H1 (cell line): ENCODE measurements at regions of chr4 and their contacts with region 1.

Region 1: GRCh38 chr4:40976343-40976742 is 226.6 kb downstream of the NSUN7 start:
- DNase-seq: no peak
- H3K4me3 ChIP-seq: no peak overlapping the region
- H3K27ac ChIP-seq: no peak overlapping the region
- H3K4me1 ChIP-seq: no peaks in the 10 kb centered on the region
- H3K27me3 ChIP-seq: no peaks in the 10 kb centered on the region
- CTCF ChIP-seq: peak in 2 of 3 experiments; percentile 16 to 59; a peak in 2 of 4 replicates
- EP300 ChIP-seq: no peak
- POLR2A ChIP-seq: no peak
- RAD21 ChIP-seq: peak; percentile 43 to 59

Region 2: DNA sequence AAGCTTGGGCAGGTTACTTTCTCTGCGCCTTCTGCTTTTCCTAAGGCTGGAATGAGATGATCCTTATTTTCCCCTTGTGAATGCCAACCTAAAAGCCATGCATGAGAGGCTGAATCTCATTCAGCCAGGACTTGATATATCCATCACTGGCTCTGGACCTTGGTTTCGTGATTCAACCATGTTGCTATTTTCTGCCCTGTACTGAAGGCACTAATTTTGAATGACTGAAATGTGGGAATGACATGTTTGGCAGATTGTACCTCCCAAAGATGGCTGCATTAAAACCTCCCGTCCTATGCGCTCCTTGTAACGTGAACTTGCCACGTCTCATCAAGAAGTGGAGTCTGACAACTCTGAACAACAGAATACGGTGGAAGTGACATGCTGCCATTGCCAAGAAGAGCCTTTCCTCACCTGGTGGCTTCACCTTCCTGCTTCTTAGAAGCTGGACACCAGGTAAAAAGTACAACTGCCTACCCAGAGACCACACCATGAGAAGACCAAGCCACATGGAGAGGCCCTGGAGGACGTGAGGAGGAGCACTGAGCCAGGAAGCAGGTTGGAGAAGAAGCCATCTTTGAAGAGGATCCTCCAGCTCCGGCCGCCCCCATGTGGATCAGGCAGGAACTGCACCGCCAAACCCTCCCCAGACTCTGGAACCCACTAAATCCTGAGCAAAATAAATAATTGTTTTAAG is 52.1 kb before region 1 on chr4:
- CTCF ChIA-PET with region 1: interaction called, 53 read pairs
- POLR2A ChIA-PET with region 1: interaction called, 3 read pairs
- DNase-seq: peak in 1 of 2 experiments; percentile 93
- H3K4me3 ChIP-seq: no peak overlapping the region
- H3K27ac ChIP-seq: no peak overlapping the region
- H3K4me1 ChIP-seq: peaks cover 0 to 5% (median 0%) of the 10 kb centered on the region in 4 experiments; a peak in 3 of 7 replicates
- H3K27me3 ChIP-seq: no peaks in the 10 kb centered on the region
- CTCF ChIP-seq: peak; percentile 74 to 84 (median 83)
- EP300 ChIP-seq: no peak
- POLR2A ChIP-seq: no peak
- RAD21 ChIP-seq: peak; percentile 54 to 69

Region 3: GRCh38 chr4:40953283-40954087 is 22.9 kb before region 1 on chr4:
- CTCF ChIA-PET with region 1: interaction called, 18 read pairs
- POLR2A ChIA-PET with region 1: no interaction called
- DNase-seq: no peak
- H3K4me3 ChIP-seq: no peak overlapping the region
- H3K27ac ChIP-seq: no peak overlapping the region
- H3K4me1 ChIP-seq: peaks cover 0 to 6% (median under 1%) of the 10 kb centered on the region in 4 experiments; a peak in 3 of 7 replicates
- H3K27me3 ChIP-seq: no peaks in the 10 kb centered on the region
- CTCF ChIP-seq: no peak
- EP300 ChIP-seq: no peak
- POLR2A ChIP-seq: no peak
- RAD21 ChIP-seq: no peak

Region 4: GRCh38 chr4:41095973-41096372 is 119.6 kb after region 1 on chr4:
- CTCF ChIA-PET with region 1: interaction called, 10 read pairs
- POLR2A ChIA-PET with region 1: no interaction called
- DNase-seq: no peak
- H3K4me3 ChIP-seq: no peak overlapping the region
- H3K27ac ChIP-seq: no peak overlapping the region
- H3K4me1 ChIP-seq: peaks cover 0 to 3% (median 0%) of the 10 kb centered on the region in 4 experiments; a peak in 1 of 7 replicates
- H3K27me3 ChIP-seq: no peaks in the 10 kb centered on the region; a peak in 1 of 7 replicates
- CTCF ChIP-seq: no peak
- EP300 ChIP-seq: no peak
- POLR2A ChIP-seq: no peak
- RAD21 ChIP-seq: no peak

Region 5: DNA sequence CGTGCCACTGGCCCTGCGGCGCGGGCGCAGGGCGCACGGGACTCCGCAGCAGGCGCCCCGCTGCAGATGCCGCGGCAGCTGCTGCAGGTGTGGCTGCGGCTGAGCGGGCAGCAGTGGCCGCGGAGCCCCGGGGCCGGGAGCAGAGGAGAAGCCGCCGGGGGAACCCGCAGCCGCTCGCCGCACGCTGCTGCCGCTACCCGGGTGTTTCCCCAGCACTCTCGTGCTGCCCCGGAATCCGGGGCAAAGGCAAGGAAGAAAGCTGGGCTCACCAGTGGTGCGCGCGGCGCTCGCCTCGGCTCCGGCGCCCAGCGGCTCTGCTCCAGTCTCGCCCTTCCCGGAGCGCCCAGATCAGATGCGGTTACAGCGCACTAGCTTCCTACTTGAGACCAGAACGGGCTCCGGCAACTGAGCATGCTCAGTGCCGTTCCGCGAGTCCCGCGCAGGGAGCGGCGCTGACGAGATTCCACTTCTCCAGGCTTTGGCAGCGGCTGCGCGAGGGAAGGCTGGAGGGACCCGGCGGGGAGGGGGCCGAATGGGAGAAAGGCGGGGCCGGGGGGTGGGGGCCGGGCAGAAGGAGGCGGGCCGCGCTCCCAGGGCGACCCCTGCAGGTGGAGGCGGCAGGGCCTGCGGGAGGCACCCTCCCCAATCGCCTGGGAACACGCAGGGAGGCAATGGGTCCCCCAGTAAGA is 237.9 kb after region 1 on chr4 and contains the start of gene APBB2:
- CTCF ChIA-PET with region 1: interaction called, 167 read pairs
- POLR2A ChIA-PET with region 1: interaction called, 7 read pairs
- DNase-seq: peak; percentile 94 to 95
- H3K4me3 ChIP-seq: peak within 1 kb of the TSS; percentile 55 to 88 (median 85)
- H3K27ac ChIP-seq: 0 out of 2 replicates have a peak within 1 kb of the TSS, but pooled peaks have one; percentile 48
- H3K4me1 ChIP-seq: peaks cover 3 to 12% (median 6%) of the 10 kb centered on the region in 4 experiments; a peak in 6 of 7 replicates
- H3K27me3 ChIP-seq: no peaks in the 10 kb centered on the region; a peak in 1 of 7 replicates
- CTCF ChIP-seq: peak; percentile 67 to 93 (median 70)
- EP300 ChIP-seq: no peak
- POLR2A ChIP-seq: peak in 1 of 2 experiments; percentile 83; a peak in 2 of 3 replicates
- RAD21 ChIP-seq: peak; percentile 74 to 75
- total RNA-seq, gene APBB2: 59.4 and 64.0 TPM in 2 replicates